CD4-positive, alpha-beta T cell (primary cell): ENCODE measurements at regions of chr20 and their contacts with region 1.

Region 1: GRCh38 chr20:36573103-36573794 is at the start of gene TGIF2:
- DNase-seq: peak; percentile 82 to 95 (median 88)
- ATAC-seq: peak; percentile 71
- H3K4me3 ChIP-seq: peak within 1 kb of the TSS; percentile 97
- H3K4me3 Mint-ChIP-seq: peak within 1 kb of the TSS; percentile 95
- H3K27ac ChIP-seq: peak within 1 kb of the TSS; percentile 100
- H3K27ac Mint-ChIP-seq: peak within 1 kb of the TSS; percentile 97
- H3K4me1 ChIP-seq: peaks cover 45% of the 10 kb centered on the region
- H3K4me1 Mint-ChIP-seq: peaks cover 40% of the 10 kb centered on the region
- H3K27me3 ChIP-seq: no peaks in the 10 kb centered on the region
- H3K27me3 Mint-ChIP-seq: no peaks in the 10 kb centered on the region
- CTCF ChIP-seq: no peak
- total RNA-seq, gene TGIF2: 29.2 to 34.5 TPM

Region 2: DNA sequence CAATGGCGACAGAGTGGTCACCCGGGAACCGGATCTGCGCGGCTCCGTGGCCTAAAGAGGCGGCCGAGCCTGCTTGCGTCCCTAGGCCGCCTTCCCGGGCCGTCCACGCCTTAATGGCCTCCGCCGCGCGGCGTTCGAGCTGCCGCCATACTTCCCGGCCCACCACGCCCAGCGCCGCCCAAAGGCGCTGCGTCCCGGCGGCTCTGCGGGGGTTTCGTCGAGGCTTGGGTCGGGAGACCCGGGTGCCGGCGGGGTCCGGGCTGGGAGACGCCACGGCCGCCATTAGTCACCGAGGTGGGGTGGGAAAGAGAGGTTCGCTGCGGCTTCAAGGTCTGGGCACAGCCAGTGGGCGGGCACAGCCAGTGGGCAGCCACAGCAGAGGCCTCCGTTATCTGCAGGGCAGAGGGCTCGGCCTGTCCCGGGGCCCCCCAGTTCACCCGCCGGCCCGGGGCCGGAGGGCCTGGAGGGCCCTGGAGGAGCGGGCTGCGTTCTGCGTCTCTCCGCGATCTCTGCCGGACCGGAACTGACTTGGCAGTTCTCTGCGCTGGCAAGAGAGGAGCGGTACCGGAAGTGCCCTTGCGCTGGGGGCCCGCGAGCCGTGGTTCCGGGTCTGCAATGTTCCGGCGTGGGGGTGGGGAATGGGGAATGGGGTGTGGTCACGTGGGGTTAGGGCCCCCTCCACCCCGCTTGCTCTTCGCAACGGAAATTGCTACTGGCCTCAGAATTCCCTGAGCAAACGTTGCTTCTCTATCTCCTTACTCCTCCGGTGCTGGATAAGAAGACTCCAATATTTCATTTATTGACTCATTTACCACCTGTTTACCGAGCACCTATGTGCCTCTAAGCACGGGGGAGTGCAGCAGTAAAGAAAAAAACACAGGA is 522.6 kb before region 1 on chr20:
- CTCF ChIA-PET with region 1: no interaction called
- POLR2A ChIA-PET with region 1: no interaction called
- intact Hi-C with region 1: loop called in 1 of 2 experiments (anchors 2 kb)
- DNase-seq: peak; percentile 77 to 94 (median 90)
- ATAC-seq: peak; percentile 95
- H3K4me3 ChIP-seq: peak overlapping the region; percentile 87
- H3K4me3 Mint-ChIP-seq: peak overlapping the region; percentile 98
- H3K27ac ChIP-seq: peak overlapping the region; percentile 83 to 88
- H3K27ac Mint-ChIP-seq: peak overlapping the region; percentile 94
- H3K4me1 ChIP-seq: peaks cover 7% of the 10 kb centered on the region
- H3K4me1 Mint-ChIP-seq: peaks cover 55% of the 10 kb centered on the region
- H3K27me3 ChIP-seq: no peaks in the 10 kb centered on the region
- H3K27me3 Mint-ChIP-seq: no peaks in the 10 kb centered on the region
- CTCF ChIP-seq: no peak

Region 3: GRCh38 chr20:36460648-36461599 is 112.3 kb before region 1 on chr20:
- CTCF ChIA-PET with region 1: no interaction called
- POLR2A ChIA-PET with region 1: interaction called, 6 read pairs
- intact Hi-C with region 1: loop called (anchors 5 kb)
- DNase-seq: peak; percentile 79 to 98 (median 90)
- ATAC-seq: peak; percentile 75
- H3K4me3 ChIP-seq: peak overlapping the region; percentile 82
- H3K4me3 Mint-ChIP-seq: peak overlapping the region; percentile 89
- H3K27ac ChIP-seq: peak overlapping the region; percentile 76 to 93
- H3K27ac Mint-ChIP-seq: peak overlapping the region; percentile 84
- H3K4me1 ChIP-seq: peaks cover 50% of the 10 kb centered on the region
- H3K4me1 Mint-ChIP-seq: peaks cover 50% of the 10 kb centered on the region
- H3K27me3 ChIP-seq: no peaks in the 10 kb centered on the region
- H3K27me3 Mint-ChIP-seq: no peaks in the 10 kb centered on the region
- CTCF ChIP-seq: no peak

Region 4: GRCh38 chr20:36550797-36551299 is 22.4 kb before region 1 on chr20:
- CTCF ChIA-PET with region 1: no interaction called
- POLR2A ChIA-PET with region 1: no interaction called
- intact Hi-C with region 1: loop called (anchors 1 to 2 kb)
- DNase-seq: no peak
- ATAC-seq: no peak
- H3K4me3 ChIP-seq: no peak overlapping the region
- H3K4me3 Mint-ChIP-seq: no peak overlapping the region
- H3K27ac ChIP-seq: no peak overlapping the region
- H3K27ac Mint-ChIP-seq: no peak overlapping the region
- H3K4me1 ChIP-seq: no peaks in the 10 kb centered on the region
- H3K4me1 Mint-ChIP-seq: no peaks in the 10 kb centered on the region
- H3K27me3 ChIP-seq: no peaks in the 10 kb centered on the region
- H3K27me3 Mint-ChIP-seq: no peaks in the 10 kb centered on the region
- CTCF ChIP-seq: no peak

Region 5: GRCh38 chr20:36591854-36592641 is 18.8 kb after region 1 on chr20:
- CTCF ChIA-PET with region 1: interaction called, 26 read pairs
- POLR2A ChIA-PET with region 1: interaction called, 115 read pairs
- intact Hi-C with region 1: loop called (anchors 2 kb)
- DNase-seq: peak in 11 of 14 experiments; percentile 27 to 88 (median 55)
- ATAC-seq: peak; percentile 51
- H3K4me3 ChIP-seq: no peak overlapping the region
- H3K4me3 Mint-ChIP-seq: peak overlapping the region; percentile 63
- H3K27ac ChIP-seq: peak overlapping the region in 1 of 2 donors; percentile 54
- H3K27ac Mint-ChIP-seq: peak overlapping the region; percentile 95
- H3K4me1 ChIP-seq: peaks cover 69% of the 10 kb centered on the region
- H3K4me1 Mint-ChIP-seq: peaks cover 52% of the 10 kb centered on the region
- H3K27me3 ChIP-seq: no peaks in the 10 kb centered on the region
- H3K27me3 Mint-ChIP-seq: no peaks in the 10 kb centered on the region
- CTCF ChIP-seq: peak; percentile 59

Region 6: DNA sequence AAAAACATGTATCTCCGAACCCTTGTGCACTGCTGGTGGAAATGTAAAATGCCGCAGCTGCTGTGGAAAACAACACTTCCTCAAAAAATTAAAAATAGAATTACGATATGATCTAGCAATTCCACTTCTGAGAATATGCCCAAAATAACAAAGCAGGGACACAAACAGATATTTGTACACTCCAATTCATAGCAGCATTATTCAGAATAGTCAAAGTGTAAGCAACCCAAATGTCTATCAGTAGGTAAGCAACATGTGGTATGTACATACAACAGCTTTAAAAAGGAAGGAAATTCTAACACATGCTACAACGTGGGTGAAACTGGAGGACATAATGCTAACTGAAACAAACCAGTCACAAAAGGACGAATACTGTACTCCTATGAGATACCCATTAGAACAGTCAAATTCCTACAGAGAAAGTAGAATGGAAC is 26.7 kb after region 1 on chr20:
- CTCF ChIA-PET with region 1: interaction called, 57 read pairs
- POLR2A ChIA-PET with region 1: interaction called, 121 read pairs
- intact Hi-C with region 1: loop called (anchors 1 kb)
- DNase-seq: no peak
- ATAC-seq: no peak
- H3K4me3 ChIP-seq: no peak overlapping the region
- H3K4me3 Mint-ChIP-seq: peak overlapping the region; percentile 25
- H3K27ac ChIP-seq: no peak overlapping the region
- H3K27ac Mint-ChIP-seq: peak overlapping the region; percentile 61
- H3K4me1 ChIP-seq: peaks cover 27% of the 10 kb centered on the region
- H3K4me1 Mint-ChIP-seq: peaks cover 26% of the 10 kb centered on the region
- H3K27me3 ChIP-seq: no peaks in the 10 kb centered on the region
- H3K27me3 Mint-ChIP-seq: no peaks in the 10 kb centered on the region
- CTCF ChIP-seq: no peak

Region 7: GRCh38 chr20:36645998-36646397 is 72.7 kb after region 1 on chr20 and contains the start of gene SLA2:
- CTCF ChIA-PET with region 1: no interaction called
- POLR2A ChIA-PET with region 1: interaction called, 34 read pairs
- intact Hi-C with region 1: no loop called
- DNase-seq: peak; percentile 53 to 88 (median 64)
- ATAC-seq: peak; percentile 83
- H3K4me3 ChIP-seq: peak within 1 kb of the TSS; percentile 79
- H3K4me3 Mint-ChIP-seq: peak within 1 kb of the TSS; percentile 98
- H3K27ac ChIP-seq: peak within 1 kb of the TSS; percentile 64 to 69
- H3K27ac Mint-ChIP-seq: peak within 1 kb of the TSS; percentile 97
- H3K4me1 ChIP-seq: peaks cover 56% of the 10 kb centered on the region
- H3K4me1 Mint-ChIP-seq: peaks cover 64% of the 10 kb centered on the region
- H3K27me3 ChIP-seq: no peaks in the 10 kb centered on the region
- H3K27me3 Mint-ChIP-seq: no peaks in the 10 kb centered on the region
- CTCF ChIP-seq: no peak
- total RNA-seq, gene SLA2: 19.9 to 21.3 TPM